ENCODE measurements at regions of chr20 and their contacts with region 1.

Region 1: DNA sequence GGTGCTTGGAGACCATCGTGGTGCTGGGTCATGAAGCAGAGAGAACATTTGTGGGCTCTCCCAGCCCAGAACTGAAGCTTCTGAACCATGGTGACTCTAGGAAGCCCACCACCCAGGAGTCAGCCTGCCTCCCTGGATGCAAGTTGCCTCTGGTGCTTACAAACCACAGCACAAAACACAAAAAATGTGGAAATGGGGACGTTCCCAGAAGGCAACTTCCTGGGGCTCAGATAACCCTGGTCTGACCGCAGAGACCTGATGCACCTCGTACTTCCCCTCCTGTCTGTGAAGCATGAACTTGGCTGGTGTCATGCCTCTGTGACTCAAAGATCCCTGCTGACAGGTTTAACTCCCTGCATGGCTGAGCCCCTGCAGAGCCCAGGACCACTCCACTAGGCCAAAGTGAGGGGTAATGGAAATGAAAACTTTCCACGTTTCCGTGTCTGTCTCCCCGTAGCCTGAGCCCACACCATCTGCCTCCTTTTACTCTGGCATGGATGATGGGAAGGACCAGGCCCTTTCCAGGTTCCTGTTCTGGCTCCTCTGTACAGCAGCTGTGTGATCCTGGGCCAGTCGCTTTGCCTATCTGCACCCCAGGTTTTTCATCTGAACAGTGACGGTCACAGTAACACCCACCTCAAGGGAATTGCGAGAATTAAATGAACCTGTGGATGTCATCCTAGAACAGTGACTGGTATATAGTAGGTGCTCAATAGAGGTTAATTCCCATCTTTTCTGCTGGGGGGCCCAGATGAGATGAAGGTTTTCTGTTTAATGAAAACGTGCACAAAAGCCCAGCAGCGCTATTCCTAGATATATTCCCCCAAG is 57.7 kb downstream of the PPP1R16B start:
- DNase-seq: peak; percentile 75
- ATAC-seq: peak; percentile 82
- H3K4me3 ChIP-seq: peak overlapping the region; percentile 38; the same call in 1 of the 2 replicates
- H3K27ac ChIP-seq: peak overlapping the region; percentile 97
- H3K4me1 ChIP-seq: peaks cover 78% of the 10 kb centered on the region
- H3K27me3 ChIP-seq: no peaks in the 10 kb centered on the region
- CTCF ChIP-seq: no peak
- EP300 ChIP-seq: peak; percentile 43 to 68; a peak in 1 of 4 replicates
- POLR2A ChIP-seq: peak; percentile 44; the same call in 1 of the 2 replicates
- RAD21 ChIP-seq: no peak

Region 2: GRCh38 chr20:38569747-38570525 is 293.3 kb before region 1 on chr20:
- CTCF ChIA-PET with region 1: no interaction called
- POLR2A ChIA-PET with region 1: no interaction called
- RAD21 ChIA-PET with region 1: no interaction called
- SMC1A ChIA-PET with region 1: no interaction called
- in situ Hi-C with region 1: no loop called
- intact Hi-C with region 1: no loop called
- DNase-seq: no peak
- ATAC-seq: no peak
- H3K4me3 ChIP-seq: no peak overlapping the region
- H3K27ac ChIP-seq: no peak overlapping the region
- H3K4me1 ChIP-seq: no peaks in the 10 kb centered on the region
- H3K27me3 ChIP-seq: no peaks in the 10 kb centered on the region
- CTCF ChIP-seq: no peak
- EP300 ChIP-seq: no peak
- POLR2A ChIP-seq: no peak
- RAD21 ChIP-seq: no peak

Region 3: GRCh38 chr20:38805502-38805957 is 57.7 kb before region 1 on chr20 and contains the start of gene PPP1R16B:
- CTCF ChIA-PET with region 1: interaction called, 61 read pairs
- POLR2A ChIA-PET with region 1: interaction called, 36 read pairs
- RAD21 ChIA-PET with region 1: interaction called, 108 read pairs
- SMC1A ChIA-PET with region 1: interaction called, 120 read pairs
- in situ Hi-C with region 1: no loop called
- intact Hi-C with region 1: no loop called
- DNase-seq: no peak
- ATAC-seq: peak; percentile 78
- H3K4me3 ChIP-seq: peak within 1 kb of the TSS; percentile 87
- H3K27ac ChIP-seq: peak within 1 kb of the TSS; percentile 84
- H3K4me1 ChIP-seq: peaks cover 31% of the 10 kb centered on the region
- H3K27me3 ChIP-seq: no peaks in the 10 kb centered on the region
- CTCF ChIP-seq: no peak
- EP300 ChIP-seq: no peak
- POLR2A ChIP-seq: peak; percentile 96
- RAD21 ChIP-seq: no peak
- polyA plus RNA-seq, gene PPP1R16B: 13.4 to 14.2 TPM

Region 4: GRCh38 chr20:38818113-38819065 is 44.8 kb before region 1 on chr20:
- CTCF ChIA-PET with region 1: interaction called, 6 read pairs
- POLR2A ChIA-PET with region 1: interaction called, 3 read pairs
- RAD21 ChIA-PET with region 1: interaction called, 7 read pairs
- SMC1A ChIA-PET with region 1: interaction called, 120 read pairs
- in situ Hi-C with region 1: no loop called
- intact Hi-C with region 1: no loop called
- DNase-seq: no peak
- ATAC-seq: peak; percentile 8; the same call in 2 of the 3 replicates
- H3K4me3 ChIP-seq: no peak overlapping the region
- H3K27ac ChIP-seq: no peak overlapping the region
- H3K4me1 ChIP-seq: peaks cover 18% of the 10 kb centered on the region
- H3K27me3 ChIP-seq: no peaks in the 10 kb centered on the region
- CTCF ChIP-seq: no peak
- EP300 ChIP-seq: no peak
- POLR2A ChIP-seq: no peak
- RAD21 ChIP-seq: no peak

Region 5: DNA sequence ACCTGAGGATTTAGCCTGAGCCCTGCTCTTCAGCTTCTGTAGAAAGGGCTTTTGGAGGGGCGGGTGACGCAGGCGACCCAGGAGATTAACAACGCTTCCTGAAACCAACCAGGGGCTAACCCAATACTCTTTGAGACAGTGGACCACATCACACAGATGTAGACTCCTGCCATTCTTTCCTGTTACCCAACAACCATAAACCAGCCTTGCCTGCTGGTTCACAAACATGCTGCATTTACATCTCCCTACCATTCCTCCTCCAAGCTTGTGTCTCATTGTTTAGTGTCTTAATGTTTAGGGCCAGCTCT is 29.4 kb before region 1 on chr20:
- CTCF ChIA-PET with region 1: interaction called, 160 read pairs
- POLR2A ChIA-PET with region 1: interaction called, 5 read pairs
- RAD21 ChIA-PET with region 1: interaction called, 18 read pairs
- SMC1A ChIA-PET with region 1: interaction called, 34 read pairs
- in situ Hi-C with region 1: no loop called
- intact Hi-C with region 1: no loop called
- DNase-seq: no peak
- ATAC-seq: peak; percentile 51
- H3K4me3 ChIP-seq: no peak overlapping the region
- H3K27ac ChIP-seq: peak overlapping the region; percentile 77
- H3K4me1 ChIP-seq: peaks cover 54% of the 10 kb centered on the region
- H3K27me3 ChIP-seq: no peaks in the 10 kb centered on the region
- CTCF ChIP-seq: no peak
- EP300 ChIP-seq: no peak
- POLR2A ChIP-seq: no peak
- RAD21 ChIP-seq: no peak

Region 6: DNA sequence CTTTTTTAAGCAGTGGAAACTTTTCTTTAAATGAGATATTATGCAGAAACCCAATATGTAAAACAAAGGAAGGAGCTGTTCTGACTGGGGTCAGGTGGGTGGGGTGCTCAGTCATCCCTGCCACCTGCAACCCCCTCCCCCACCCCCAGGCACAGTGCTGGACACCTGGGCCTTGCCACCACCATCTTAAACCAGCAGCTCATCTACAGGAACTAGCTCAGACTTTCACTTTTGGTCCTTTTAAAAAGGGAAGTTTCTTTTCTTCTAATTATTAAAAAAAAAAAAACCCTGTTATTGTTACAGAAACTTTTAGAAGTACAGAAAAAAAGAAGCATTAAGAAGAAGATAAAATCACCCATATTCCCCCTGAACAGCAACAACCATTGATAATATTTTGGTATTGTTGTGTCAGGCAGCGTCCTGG is 20.7 kb before region 1 on chr20:
- CTCF ChIA-PET with region 1: interaction called, 160 read pairs
- POLR2A ChIA-PET with region 1: interaction called, 93 read pairs
- RAD21 ChIA-PET with region 1: interaction called, 125 read pairs
- SMC1A ChIA-PET with region 1: interaction called, 138 read pairs
- in situ Hi-C with region 1: no loop called
- intact Hi-C with region 1: loop called (anchors 1 kb)
- DNase-seq: peak; percentile 91
- ATAC-seq: peak; percentile 99
- H3K4me3 ChIP-seq: peak overlapping the region; percentile 8; the same call in 1 of the 2 replicates
- H3K27ac ChIP-seq: peak overlapping the region; percentile 96
- H3K4me1 ChIP-seq: peaks cover 59% of the 10 kb centered on the region
- H3K27me3 ChIP-seq: no peaks in the 10 kb centered on the region
- CTCF ChIP-seq: no peak
- EP300 ChIP-seq: peak; percentile 67 to 95
- POLR2A ChIP-seq: no peak
- RAD21 ChIP-seq: peak; percentile 29; the same call in 1 of the 2 replicates

Region 7: DNA sequence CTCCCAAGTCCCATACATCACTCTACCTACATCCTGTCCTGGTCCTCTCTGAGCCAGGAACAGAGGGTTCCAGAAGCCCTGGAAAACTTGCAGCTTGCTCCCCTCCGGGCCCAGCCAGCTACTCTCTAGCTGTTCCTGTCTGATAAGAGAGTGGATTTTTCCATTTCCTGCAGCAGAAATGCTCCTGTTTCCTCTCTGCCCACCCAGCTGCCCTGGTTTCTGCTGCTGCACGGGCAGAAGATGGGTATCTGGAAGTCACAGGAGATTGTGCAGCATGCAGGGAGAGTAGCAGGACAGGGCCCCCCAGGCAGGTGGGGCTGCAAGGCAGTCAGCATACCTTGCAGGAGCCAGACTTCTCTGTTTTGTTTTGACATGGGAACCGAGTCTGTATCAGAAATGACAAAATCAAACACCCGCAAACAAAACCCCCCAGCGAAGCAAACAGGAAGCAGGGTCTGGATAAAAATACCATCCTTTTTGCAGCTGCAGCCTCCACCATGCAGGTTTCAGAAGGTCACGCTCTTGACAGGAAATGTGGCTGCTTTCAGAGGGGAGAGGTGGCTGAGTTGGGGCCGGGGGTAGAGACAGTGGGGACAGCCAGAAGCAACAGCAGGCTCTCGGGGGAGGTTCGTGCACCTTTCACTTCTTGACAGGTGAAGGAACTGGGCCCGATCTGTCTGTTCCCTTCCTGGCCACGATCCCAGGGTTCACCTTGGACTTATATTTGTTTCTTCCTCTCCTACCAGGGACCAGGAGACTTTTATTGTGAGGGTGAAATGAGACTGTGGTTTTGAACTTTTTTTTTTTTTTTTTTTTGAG is 12.1 kb after region 1 on chr20:
- CTCF ChIA-PET with region 1: interaction called, 87 read pairs
- POLR2A ChIA-PET with region 1: interaction called, 67 read pairs
- RAD21 ChIA-PET with region 1: interaction called, 50 read pairs
- SMC1A ChIA-PET with region 1: interaction called, 248 read pairs
- in situ Hi-C with region 1: no loop called
- intact Hi-C with region 1: loop called (anchors 1 kb)
- DNase-seq: peak; percentile 97
- ATAC-seq: peak; percentile 68
- H3K4me3 ChIP-seq: peak overlapping the region; percentile 44
- H3K27ac ChIP-seq: peak overlapping the region; percentile 96
- H3K4me1 ChIP-seq: peaks cover 80% of the 10 kb centered on the region
- H3K27me3 ChIP-seq: no peaks in the 10 kb centered on the region
- CTCF ChIP-seq: no peak
- EP300 ChIP-seq: peak; percentile 96 to 99
- POLR2A ChIP-seq: peak; percentile 76
- RAD21 ChIP-seq: peak; percentile 14; the same call in 1 of the 2 replicates

Region 8: DNA sequence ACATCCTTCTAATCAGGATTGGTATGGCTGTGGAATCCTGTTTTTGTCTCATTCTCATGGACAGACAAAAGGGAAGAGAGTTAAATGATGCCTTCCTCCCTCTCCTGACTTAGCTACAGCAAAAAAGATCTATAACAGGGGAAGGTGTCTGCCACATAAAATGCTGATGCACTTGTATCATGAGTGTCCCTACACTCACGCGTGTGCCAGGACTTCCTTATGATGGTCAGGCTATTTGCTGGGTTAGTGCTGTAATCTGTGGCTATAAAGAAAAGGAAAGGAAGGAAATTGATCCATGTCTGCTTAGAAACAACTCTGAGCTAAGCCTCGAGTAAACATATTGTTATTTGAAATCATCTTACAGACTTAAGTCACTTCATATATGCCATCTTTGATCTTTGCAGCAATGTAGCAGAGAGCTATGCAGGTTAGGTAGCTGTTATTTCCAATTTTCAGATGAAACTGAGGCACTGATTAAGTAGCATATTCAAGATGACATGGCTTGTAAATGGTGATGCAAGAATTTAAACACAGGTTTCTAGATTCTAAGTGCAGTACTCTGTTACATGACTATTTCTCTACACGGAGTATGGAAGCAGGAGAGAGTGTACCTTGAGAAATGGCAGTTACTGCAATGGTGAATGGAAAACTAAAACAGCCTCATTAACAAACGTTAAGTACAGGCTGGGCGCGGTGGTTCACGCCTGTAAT is 90.5 kb after region 1 on chr20:
- CTCF ChIA-PET with region 1: no interaction called
- POLR2A ChIA-PET with region 1: no interaction called
- RAD21 ChIA-PET with region 1: no interaction called
- SMC1A ChIA-PET with region 1: no interaction called
- in situ Hi-C with region 1: no loop called
- intact Hi-C with region 1: no loop called
- DNase-seq: no peak
- ATAC-seq: no peak
- H3K4me3 ChIP-seq: no peak overlapping the region
- H3K27ac ChIP-seq: no peak overlapping the region
- H3K4me1 ChIP-seq: no peaks in the 10 kb centered on the region
- H3K27me3 ChIP-seq: no peaks in the 10 kb centered on the region
- CTCF ChIP-seq: no peak
- EP300 ChIP-seq: no peak
- POLR2A ChIP-seq: no peak
- RAD21 ChIP-seq: no peak

Region 9: GRCh38 chr20:38985603-38986170 is 122.4 kb after region 1 on chr20:
- CTCF ChIA-PET with region 1: no interaction called
- POLR2A ChIA-PET with region 1: interaction called, 11 read pairs
- RAD21 ChIA-PET with region 1: no interaction called
- SMC1A ChIA-PET with region 1: no interaction called
- in situ Hi-C with region 1: no loop called
- intact Hi-C with region 1: no loop called
- DNase-seq: peak; percentile 20
- ATAC-seq: peak; percentile 58
- H3K4me3 ChIP-seq: no peak overlapping the region
- H3K27ac ChIP-seq: peak overlapping the region; percentile 17
- H3K4me1 ChIP-seq: peaks cover 34% of the 10 kb centered on the region
- H3K27me3 ChIP-seq: no peaks in the 10 kb centered on the region
- CTCF ChIP-seq: no peak
- EP300 ChIP-seq: no peak
- POLR2A ChIP-seq: no peak
- RAD21 ChIP-seq: no peak

Measured in GM12878 (cell line).